Psoas muscle (tissue), 8 donors: ENCODE measurements at regions of chr20 and their contacts with region 1.

Region 1: GRCh38 chr20:20837574-20838021 is 125.2 kb upstream of the RALGAPA2 start:
- DNase-seq: peak; percentile 42 to 73
- ATAC-seq: peak; percentile 58 to 88 (median 68)
- H3K4me3 ChIP-seq: peak overlapping the region; percentile 33
- H3K27ac ChIP-seq: no peak overlapping the region
- H3K4me1 ChIP-seq: peaks cover 6% of the 10 kb centered on the region
- H3K27me3 ChIP-seq: no peaks in the 10 kb centered on the region
- CTCF ChIP-seq: peak; percentile 76

Region 2: DNA sequence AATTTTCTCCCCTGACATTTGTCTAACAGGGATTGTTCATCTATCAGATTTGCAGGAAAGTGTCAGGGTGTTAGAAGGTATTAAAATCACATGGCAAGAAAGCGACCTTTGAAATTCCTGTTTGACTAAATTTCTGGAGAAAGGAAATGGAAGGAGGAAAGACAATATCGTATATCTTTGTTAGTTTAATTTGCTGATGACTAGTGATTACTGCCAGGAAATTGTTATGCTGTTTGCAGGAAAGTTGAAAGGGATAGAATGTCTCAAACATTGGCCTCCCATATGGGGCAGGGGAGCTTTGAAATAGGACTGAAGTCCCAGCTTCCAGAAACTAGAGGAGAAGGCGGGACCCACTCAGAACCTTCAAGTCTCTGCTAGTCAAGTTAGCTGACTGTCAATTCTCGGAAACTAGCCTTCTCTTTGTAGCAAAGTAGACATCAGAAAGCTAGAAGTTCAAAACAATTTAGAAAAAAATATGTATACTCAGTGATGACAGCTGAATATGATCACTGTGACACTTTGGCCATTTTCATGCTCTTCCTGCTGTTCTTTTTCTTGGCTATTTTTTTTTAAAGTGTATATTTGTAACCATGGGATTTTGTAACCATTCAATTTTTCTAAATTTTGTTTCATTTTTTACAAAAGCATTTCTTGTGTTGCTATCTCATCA is 71.8 kb before region 1 on chr20:
- intact Hi-C with region 1: no loop called
- DNase-seq: no peak
- ATAC-seq: no peak
- H3K4me3 ChIP-seq: no peak overlapping the region
- H3K27ac ChIP-seq: no peak overlapping the region
- H3K4me1 ChIP-seq: peaks cover 18% of the 10 kb centered on the region
- H3K27me3 ChIP-seq: no peaks in the 10 kb centered on the region
- CTCF ChIP-seq: no peak

Region 3: GRCh38 chr20:20806121-20807095 is 31.2 kb before region 1 on chr20:
- intact Hi-C with region 1: no loop called
- DNase-seq: no peak
- ATAC-seq: no peak
- H3K4me3 ChIP-seq: no peak overlapping the region
- H3K27ac ChIP-seq: no peak overlapping the region
- H3K4me1 ChIP-seq: no peaks in the 10 kb centered on the region
- H3K27me3 ChIP-seq: no peaks in the 10 kb centered on the region
- CTCF ChIP-seq: no peak

Region 4: DNA sequence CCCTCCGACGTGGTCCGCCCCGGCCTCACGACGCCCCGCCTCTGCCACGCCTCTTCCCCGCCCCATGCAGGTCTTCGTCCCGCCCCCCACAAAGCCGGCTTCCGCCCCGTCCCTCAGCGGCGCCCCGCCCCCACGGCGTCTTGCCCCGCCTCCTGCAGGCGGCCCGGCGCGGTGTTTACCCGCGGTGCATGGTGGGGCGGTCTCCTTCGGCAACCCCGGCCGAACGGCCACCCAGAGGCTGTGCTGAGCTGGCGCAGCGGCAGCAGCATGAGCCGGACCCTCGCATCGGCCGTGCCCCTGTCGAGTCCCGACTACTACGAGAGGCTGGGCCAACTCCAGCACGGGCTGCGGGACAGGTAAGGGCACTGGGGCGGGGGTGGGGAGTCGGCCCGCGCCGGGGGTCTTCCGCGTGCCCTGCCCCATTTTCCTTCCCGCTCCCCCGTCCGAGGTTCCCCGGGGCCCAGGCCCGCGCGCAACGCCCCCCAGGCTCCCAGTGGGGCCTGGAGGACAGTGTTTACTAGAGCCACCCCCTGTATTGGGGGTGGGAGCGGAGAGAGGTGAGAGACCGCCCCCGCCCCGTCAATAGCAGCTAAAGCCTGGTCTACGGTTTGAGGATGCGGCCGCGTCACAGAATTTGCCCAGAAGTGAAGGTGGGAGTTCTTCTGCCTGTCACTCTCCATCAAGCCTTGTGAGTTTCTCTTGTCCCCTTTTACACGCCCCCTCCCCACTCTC is 288.4 kb after region 1 on chr20 and contains the start of gene KIZ:
- intact Hi-C with region 1: loop called in 1 of 2 experiments (anchors 10 kb)
- DNase-seq: peak; percentile 97 to 99
- ATAC-seq: peak; percentile 98 to 99 (median 98)
- H3K4me3 ChIP-seq: peak within 1 kb of the TSS; percentile 91
- H3K27ac ChIP-seq: peak within 1 kb of the TSS; percentile 91
- H3K4me1 ChIP-seq: peaks cover 12% of the 10 kb centered on the region
- H3K27me3 ChIP-seq: no peaks in the 10 kb centered on the region
- CTCF ChIP-seq: peak; percentile 45
- total RNA-seq, gene KIZ: 18.6 to 26.2 (median 22.7) TPM

Region 5: DNA sequence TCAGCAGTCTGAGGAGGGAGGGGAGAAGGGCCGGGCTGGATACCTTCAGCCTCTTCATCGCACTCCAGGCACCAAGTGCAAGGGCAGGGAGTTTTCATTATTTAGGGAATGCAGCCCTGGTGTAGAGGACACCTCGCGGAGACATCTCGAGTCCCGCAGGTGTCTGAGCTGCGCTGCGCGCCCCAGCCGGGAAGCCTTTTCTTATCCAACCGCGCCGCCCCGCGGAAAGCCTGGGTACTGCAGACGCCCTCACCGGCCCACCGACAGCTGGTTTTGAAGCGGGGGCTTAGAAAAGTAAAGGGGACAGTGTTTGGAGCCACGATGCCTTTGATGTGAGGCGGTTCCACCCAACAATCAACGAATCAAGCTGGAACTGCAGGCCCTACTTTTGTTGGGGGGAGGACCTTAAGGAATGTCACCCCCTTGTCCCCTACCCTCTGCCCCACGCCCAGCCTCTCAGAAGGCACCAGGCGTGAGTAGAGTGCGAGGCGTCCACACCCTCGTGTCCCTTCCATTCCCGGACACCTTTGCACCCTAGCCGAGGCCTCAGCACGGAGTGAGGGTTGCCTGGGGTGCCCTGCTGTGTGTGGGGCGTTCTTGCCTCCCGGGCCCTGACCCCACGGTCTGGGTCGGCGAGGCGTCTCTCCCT is 667.7 kb after region 1 on chr20:
- intact Hi-C with region 1: loop called in 1 of 2 experiments (anchors 2 kb)
- DNase-seq: peak; percentile 58 to 77
- ATAC-seq: peak; percentile 77 to 86 (median 84)
- H3K4me3 ChIP-seq: peak overlapping the region; percentile 62
- H3K27ac ChIP-seq: no peak overlapping the region
- H3K4me1 ChIP-seq: peaks cover 21% of the 10 kb centered on the region
- H3K27me3 ChIP-seq: peaks cover 4 to 88% (median 57%) of the 10 kb centered on the region in 3 donors
- CTCF ChIP-seq: peak; percentile 97

Region 6: DNA sequence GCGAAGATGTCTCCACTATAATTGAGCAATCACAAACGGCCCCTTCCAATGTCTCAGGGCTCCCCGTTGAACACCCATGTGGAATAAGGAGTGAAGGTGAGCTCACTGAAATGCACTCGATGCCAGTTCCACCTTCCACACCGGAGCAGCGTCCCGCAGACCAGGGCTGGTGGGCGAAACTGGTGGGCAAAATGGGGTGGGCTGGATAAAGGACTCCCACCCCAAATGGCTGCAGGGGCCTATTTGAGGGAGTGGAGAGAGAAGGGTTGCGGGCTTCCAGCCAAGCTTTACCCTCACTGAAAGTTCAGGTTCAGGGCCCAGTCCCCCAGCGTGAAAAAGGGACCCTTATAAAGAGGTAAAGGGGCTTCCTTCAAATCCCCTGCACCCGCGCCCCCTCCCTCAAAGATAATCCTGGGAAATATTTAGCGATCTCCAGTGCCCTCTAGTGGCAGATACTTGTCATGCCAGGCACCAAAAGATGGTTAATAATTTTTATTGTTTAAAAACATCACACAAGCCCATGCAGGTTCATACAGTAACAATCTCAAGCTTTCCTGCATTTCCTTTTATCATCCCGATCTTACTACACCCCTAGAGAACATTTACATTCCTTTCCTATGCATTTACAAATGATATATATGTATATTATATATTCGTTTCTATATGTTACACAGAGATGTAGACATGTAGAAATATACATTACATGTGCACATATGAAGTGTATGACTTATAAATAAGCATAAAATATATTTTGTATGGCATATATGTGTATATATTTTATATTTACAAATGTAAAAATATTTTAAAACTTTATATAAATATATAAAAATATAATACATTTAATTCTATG is 734.5 kb after region 1 on chr20:
- intact Hi-C with region 1: loop called in 1 of 2 experiments (anchors 5 kb)
- DNase-seq: no peak
- ATAC-seq: no peak
- H3K4me3 ChIP-seq: no peak overlapping the region
- H3K27ac ChIP-seq: no peak overlapping the region
- H3K4me1 ChIP-seq: no peaks in the 10 kb centered on the region
- H3K27me3 ChIP-seq: peaks cover 0 to 5% (median 0%) of the 10 kb centered on the region in 3 donors
- CTCF ChIP-seq: peak; percentile 87

Region 7: DNA sequence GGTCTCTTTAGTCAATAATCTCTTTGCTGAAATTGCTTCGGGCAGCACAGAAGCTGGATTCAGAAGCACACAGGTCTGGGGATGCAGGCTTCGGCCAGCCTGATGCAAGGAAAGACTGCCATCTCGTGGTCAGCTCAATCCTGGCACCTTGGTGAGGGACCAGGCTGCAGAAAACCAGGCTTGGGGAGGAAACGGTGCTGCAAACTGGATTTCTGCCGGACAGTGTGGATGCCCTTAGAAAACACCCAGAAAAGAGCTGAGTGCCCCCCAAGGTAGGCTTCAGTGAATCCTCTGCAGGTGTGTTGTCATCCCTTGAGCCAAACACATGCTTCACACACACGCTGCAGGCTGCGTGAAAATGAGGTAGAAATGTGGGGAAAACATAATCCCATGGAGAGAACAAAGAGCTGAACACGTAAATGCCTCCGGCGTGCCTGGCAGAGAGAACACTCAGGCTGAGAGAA is 778.1 kb after region 1 on chr20:
- intact Hi-C with region 1: loop called in 1 of 2 experiments (anchors 5 kb)
- DNase-seq: peak; percentile 35 to 64
- ATAC-seq: peak; percentile 47 to 62 (median 52)
- H3K4me3 ChIP-seq: no peak overlapping the region
- H3K27ac ChIP-seq: no peak overlapping the region
- H3K4me1 ChIP-seq: no peaks in the 10 kb centered on the region
- H3K27me3 ChIP-seq: peaks cover 0 to 2% (median 0%) of the 10 kb centered on the region in 3 donors
- CTCF ChIP-seq: peak; percentile 65